Right ventricle myocardium inferior (tissue), 1 donor: ENCODE measurements at regions of chr1 and their contacts with region 1.

Region 1: GRCh38 chr1:226608699-226609505 is 60.3 kb downstream of the STUM start:
- DNase-seq: peak; percentile 84
- ATAC-seq: peak; percentile 43

Region 2: GRCh38 chr1:226424228-226425003 is 184.5 kb before region 1 on chr1:
- intact Hi-C with region 1: loop called (anchors 10 kb)
- DNase-seq: no peak
- ATAC-seq: peak; percentile 80

Region 3: GRCh38 chr1:226589008-226589733 is 19.7 kb before region 1 on chr1:
- intact Hi-C with region 1: no loop called
- DNase-seq: peak; percentile 64
- ATAC-seq: peak; percentile 47

Region 4: DNA sequence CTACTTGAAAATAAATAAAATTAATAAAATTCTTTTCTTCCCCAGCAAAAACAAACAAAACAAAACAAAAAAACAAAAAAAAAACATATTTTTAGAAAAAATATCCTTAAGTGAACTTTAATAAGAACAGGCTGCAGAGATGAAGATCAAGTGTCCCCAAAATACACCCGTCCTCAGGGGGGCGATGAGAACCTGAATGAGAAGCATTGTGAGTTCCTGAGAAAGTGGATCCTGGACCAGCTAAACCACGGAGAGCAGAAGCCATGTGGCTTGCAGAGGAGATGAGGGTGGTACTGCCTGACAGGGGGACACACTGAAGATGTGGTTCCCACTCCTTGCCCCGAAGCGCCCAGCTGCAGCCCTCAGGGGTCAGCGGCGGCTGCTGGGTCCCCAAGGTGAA is 40.9 kb after region 1 on chr1:
- intact Hi-C with region 1: no loop called
- DNase-seq: no peak
- ATAC-seq: no peak